A549 (cell line): ENCODE measurements at regions of chr16 and their contacts with region 1.

Region 1: DNA sequence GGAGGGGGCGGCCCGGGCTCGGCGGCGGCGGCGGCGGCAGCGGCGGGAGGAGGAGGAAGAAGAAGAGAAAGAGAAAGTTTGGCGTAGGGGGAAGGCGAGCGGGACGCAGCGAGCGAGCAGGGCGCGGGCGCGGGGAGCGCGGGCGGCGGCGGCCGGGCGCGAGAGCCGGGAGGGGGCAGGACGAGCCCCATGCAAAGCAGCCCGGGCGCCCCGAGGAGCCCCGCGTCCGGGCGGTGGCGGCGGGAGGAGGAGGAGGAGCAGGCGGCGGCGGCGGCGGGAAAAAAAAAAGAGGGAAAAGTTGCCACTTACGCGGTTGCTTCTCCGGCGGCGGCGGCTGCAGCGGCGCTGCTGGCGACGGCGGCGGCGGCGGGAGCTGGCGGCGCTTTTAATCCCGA is 10.3 kb upstream of the ZFHX3 start:
- DNase-seq: no peak
- ATAC-seq: peak in 1 of 2 experiments; percentile 43; a peak in 3 of 6 replicates
- H3K4me3 ChIP-seq: peak overlapping the region; percentile 84
- H3K27ac ChIP-seq: peak overlapping the region; percentile 99
- H3K4me1 ChIP-seq: peaks cover 41% of the 10 kb centered on the region
- CTCF ChIP-seq: no peak
- EP300 ChIP-seq: no peak
- POLR2A ChIP-seq: no peak
- RAD21 ChIP-seq: no peak

Region 2: GRCh38 chr16:72876221-72876620 is 182.0 kb before region 1 on chr16:
- CTCF ChIA-PET with region 1: no interaction called
- POLR2A ChIA-PET with region 1: no interaction called
- DNase-seq: no peak
- ATAC-seq: no peak
- H3K4me3 ChIP-seq: no peak overlapping the region
- H3K27ac ChIP-seq: peak overlapping the region; percentile 74 to 84
- H3K4me1 ChIP-seq: peaks cover 43% of the 10 kb centered on the region
- CTCF ChIP-seq: no peak
- EP300 ChIP-seq: no peak
- POLR2A ChIP-seq: no peak
- RAD21 ChIP-seq: no peak

Region 3: DNA sequence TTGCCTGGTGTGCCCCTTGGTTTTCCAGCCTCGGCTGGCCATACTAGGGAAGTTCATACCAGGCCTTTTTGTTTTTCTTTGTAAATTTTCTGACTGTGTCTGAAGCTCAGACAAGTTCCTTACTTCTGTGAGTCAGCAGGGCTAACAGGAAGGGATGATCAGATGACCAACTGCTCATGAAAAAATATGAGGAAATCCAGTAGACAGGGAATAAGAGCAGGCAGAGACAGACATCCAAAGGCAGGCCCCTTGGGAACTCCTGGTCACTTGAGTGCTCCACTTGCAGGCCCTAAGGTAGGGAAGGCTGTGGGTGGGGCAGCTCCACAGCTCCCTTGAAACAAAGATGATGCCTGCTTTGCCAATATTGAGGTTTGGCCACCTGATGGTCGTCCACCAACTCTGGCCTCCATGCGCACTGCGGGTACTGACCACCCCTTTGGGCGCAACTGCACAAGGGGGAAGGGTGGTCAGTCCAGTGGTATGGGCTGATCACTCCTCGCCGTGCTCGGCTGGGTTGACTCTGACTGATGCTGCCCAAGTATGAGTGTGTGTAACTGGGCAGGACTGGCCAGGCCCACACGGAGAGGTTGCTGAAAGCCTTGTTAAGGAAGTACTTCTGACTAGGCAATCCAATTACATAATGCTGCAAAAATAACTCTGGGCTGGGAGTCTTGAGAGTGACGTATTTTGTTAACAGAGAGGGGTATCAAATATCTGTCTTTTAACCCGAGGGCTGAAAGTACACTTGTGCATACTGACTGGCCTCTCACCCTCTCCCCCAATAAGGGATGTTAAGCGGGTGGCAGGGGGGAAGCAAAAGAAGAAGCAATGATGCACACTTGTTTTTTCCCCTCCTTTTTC is 10.6 kb after region 1 on chr16:
- CTCF ChIA-PET with region 1: interaction called, 4 read pairs
- POLR2A ChIA-PET with region 1: interaction called, 63 read pairs
- DNase-seq: peak in 1 of 2 experiments; percentile 89
- ATAC-seq: peak; percentile 70 to 71
- H3K4me3 ChIP-seq: no peak overlapping the region
- H3K27ac ChIP-seq: peak overlapping the region; percentile 91 to 94
- H3K4me1 ChIP-seq: peaks cover 59% of the 10 kb centered on the region
- CTCF ChIP-seq: no peak
- EP300 ChIP-seq: no peak; a peak in 1 of 5 replicates
- POLR2A ChIP-seq: no peak
- RAD21 ChIP-seq: no peak

Region 4: DNA sequence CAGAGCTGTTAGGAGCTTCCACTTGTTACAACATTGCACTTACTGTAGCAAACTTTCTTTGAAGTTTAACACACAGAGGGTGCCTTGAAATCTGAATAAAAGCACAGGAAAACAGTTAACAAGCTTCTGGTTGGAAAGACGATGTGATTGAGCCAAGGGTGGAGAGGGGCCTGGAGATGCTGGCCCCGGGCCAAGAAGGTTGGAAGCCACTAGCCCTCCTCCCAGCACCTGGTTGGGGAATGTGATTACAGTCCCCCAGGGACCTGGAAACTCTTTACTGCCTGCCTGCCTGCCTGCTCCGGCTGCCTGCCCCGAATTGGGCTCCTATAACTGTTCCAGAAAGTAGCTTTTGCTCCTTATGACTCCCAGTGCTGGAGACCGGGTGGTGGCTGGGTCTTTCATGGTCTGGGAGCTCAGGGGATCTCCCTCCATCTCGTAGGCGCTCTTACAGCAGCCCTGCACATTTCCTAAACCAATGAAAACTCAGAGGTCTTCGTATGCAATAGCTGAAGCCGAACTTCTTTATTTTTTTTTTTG is 37.7 kb after region 1 on chr16:
- CTCF ChIA-PET with region 1: interaction called, 5 read pairs
- POLR2A ChIA-PET with region 1: interaction called, 12 read pairs
- DNase-seq: peak in 1 of 2 experiments; percentile 82
- ATAC-seq: peak; percentile 77 to 78
- H3K4me3 ChIP-seq: 0 out of 3 replicates have a peak overlapping the region, but pooled peaks have one; percentile 12
- H3K27ac ChIP-seq: peak overlapping the region; percentile 82 to 85
- H3K4me1 ChIP-seq: peaks cover 36% of the 10 kb centered on the region
- CTCF ChIP-seq: no peak
- EP300 ChIP-seq: no peak
- POLR2A ChIP-seq: no peak
- RAD21 ChIP-seq: no peak; a peak in 1 of 5 replicates

Region 5: DNA sequence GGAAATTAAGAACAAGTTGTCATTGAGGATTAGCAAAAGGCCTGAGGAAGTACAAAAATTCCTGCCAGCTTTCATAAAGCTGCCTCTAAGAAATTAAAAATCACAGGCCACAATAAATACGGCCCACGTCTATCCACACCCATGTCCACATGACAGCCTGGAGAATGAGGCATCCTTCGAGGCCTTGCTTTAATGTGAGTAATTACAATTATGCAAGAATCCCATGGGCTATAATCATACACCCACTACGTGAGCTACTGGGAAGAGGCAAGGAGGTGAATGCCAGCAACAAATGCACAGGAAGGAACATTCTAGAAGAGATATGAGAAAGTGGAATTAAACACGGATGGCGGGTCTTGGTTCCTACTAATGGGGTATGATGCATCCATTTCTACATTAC is 55.1 kb after region 1 on chr16:
- CTCF ChIA-PET with region 1: no interaction called
- POLR2A ChIA-PET with region 1: no interaction called
- DNase-seq: no peak
- ATAC-seq: no peak
- H3K4me3 ChIP-seq: no peak overlapping the region
- H3K27ac ChIP-seq: no peak overlapping the region
- H3K4me1 ChIP-seq: no peaks in the 10 kb centered on the region
- CTCF ChIP-seq: no peak
- EP300 ChIP-seq: no peak
- POLR2A ChIP-seq: no peak
- RAD21 ChIP-seq: no peak

Region 6: DNA sequence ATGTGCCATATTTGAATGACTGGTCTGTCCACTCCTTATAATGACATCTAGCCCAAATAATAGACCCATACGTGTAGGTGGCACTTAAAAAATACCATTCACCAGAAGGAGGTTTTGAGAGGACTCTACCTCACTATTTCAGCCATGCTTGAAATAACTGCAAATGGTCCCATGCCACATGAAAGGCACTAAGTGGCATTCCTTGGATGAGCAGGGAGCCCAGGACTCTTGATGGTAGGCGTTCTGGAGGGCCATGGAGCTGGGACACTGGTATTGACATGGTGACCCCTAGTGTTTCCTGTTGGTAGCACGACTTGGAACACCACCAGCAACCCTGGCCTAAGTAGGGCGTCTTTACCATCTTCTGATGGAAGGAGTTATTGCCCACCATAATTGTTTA is 138.5 kb after region 1 on chr16:
- CTCF ChIA-PET with region 1: interaction called, 10 read pairs
- POLR2A ChIA-PET with region 1: interaction called, 3 read pairs
- DNase-seq: peak; percentile 80 to 81
- ATAC-seq: peak; percentile 91 to 97
- H3K4me3 ChIP-seq: no peak overlapping the region
- H3K27ac ChIP-seq: no peak overlapping the region
- H3K4me1 ChIP-seq: no peaks in the 10 kb centered on the region
- CTCF ChIP-seq: peak; percentile 58
- EP300 ChIP-seq: no peak
- POLR2A ChIP-seq: no peak
- RAD21 ChIP-seq: peak; percentile 76 to 89